Mucosa of descending colon (tissue), 3 donors: ENCODE measurements at regions of chr6 and their contacts with region 1.

Region 1: GRCh38 chr6:163565140-163565539 is 150.6 kb downstream of the QKI start:
- DNase-seq: peak in 1 of 3 donors; percentile 16
- ATAC-seq: peak; percentile 58
- H3K4me3 ChIP-seq: no peak overlapping the region
- H3K4me1 ChIP-seq: no peaks in the 10 kb centered on the region
- CTCF ChIP-seq: no peak

Region 2: DNA sequence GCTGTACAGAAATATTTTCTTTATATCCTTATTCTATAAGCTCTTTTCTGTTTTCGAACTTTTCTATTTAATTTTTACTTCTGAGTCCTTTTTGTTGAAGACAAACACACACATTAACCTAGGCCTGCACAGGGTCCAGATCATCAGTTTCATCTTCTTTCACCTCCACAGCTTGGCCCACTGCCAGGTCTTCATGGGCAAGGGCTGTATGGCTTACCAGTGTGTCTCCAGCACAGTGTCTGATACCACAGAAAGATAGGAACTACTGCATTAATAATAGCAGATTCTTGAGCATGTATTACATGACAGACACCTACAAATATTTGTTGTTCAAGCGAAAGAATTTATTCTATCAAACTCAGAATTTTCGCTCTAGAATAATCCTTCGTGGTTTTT is 126.2 kb before region 1 on chr6:
- intact Hi-C with region 1: loop called in 1 of 2 experiments (anchors 10 kb)
- DNase-seq: peak in 2 of 3 donors; percentile 52 to 62
- ATAC-seq: no peak
- H3K4me3 ChIP-seq: no peak overlapping the region
- H3K4me1 ChIP-seq: no peaks in the 10 kb centered on the region
- CTCF ChIP-seq: no peak